ENCODE measurements at regions of chr11 and their contacts with region 1.

Region 1: GRCh38 chr11:68213555-68214174 is 569 bp upstream of the KMT5B start:
- DNase-seq: peak; percentile 79 to 93
- H3K4me3 ChIP-seq: peak overlapping the region; percentile 67 to 95
- H3K27ac ChIP-seq: peak overlapping the region; percentile 97 to 98
- H3K4me1 ChIP-seq: peaks cover 0 to 50% (median 32%) of the 10 kb centered on the region in 4 donors
- H3K27me3 ChIP-seq: no peaks in the 10 kb centered on the region
- CTCF ChIP-seq: peak; percentile 8 to 16

Region 2: DNA sequence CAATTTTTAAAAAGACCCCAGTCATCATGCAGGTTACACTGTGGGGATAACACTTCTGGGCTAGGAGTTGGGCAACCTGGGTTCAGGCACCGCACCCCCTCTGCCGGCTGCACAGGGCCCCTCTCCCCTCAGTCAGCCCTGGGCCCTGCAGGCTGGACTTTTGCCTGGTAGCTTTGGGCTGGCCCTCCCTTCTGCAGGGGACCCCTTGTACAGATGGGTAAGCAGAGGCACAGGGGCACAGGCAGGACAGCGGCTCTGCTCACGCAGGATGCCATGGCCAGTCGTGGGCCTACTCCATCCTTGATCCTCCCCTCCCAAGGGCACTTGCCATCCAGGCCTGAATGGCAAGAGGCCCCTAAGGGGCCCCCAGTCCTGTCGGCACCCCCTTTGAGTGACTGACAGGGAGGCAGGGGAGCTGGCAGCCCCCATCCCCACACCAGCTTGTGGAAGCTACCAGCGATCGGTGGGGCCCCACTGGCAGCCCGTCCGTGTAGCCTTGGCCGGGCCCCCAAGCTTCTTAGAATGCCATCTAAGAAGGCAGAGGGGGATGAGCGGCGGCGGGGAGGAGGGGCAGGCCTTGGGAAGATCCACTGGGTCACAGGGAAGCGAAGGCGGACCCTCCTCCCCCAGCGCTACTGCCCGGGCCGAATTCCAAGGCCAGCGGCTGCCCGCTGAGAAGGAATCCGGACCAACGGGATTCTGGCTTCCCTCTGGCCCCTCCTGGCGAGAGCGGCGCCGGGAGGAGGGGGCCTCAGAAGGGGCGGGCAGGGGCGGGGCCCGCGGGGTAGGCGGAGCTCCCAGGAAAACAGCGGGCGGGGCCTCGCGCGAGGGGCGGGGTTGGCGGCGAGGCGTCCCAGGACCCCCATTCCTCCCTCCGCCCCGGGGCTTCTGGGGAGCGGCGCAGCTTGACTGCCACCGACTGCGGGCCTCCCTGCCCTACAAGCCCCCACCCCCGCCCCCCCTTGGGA is 85.7 kb before region 1 on chr11:
- intact Hi-C with region 1: loop called (anchors 5 kb)
- DNase-seq: peak in 1 of 2 donors; percentile 74
- H3K4me3 ChIP-seq: peak overlapping the region; percentile 49 to 60
- H3K27ac ChIP-seq: peak overlapping the region; percentile 73 to 76
- H3K4me1 ChIP-seq: peaks cover 0 to 27% (median 16%) of the 10 kb centered on the region in 4 donors
- H3K27me3 ChIP-seq: no peaks in the 10 kb centered on the region
- CTCF ChIP-seq: no peak

Region 3: DNA sequence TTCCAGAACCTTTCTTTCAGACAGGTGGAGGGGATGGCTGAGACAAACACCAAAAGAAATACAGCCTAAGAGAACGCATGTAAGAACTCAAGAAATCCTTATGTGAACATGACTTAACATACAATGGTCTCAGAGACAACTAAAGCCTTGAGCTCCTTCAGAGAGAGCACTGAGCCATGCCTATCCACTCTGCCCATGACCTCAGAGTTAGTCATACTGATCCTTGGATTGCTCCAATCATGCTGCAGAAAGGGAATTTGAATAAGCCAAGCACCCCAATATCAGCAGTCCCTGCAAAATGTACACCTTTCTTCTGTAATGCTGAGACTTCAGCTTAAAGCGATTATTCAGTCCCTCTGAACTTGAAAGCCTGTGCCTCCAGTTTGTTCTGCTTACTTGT is 49.2 kb before region 1 on chr11:
- intact Hi-C with region 1: no loop called
- DNase-seq: no peak
- H3K4me3 ChIP-seq: no peak overlapping the region
- H3K27ac ChIP-seq: no peak overlapping the region
- H3K4me1 ChIP-seq: no peaks in the 10 kb centered on the region
- H3K27me3 ChIP-seq: no peaks in the 10 kb centered on the region
- CTCF ChIP-seq: no peak

Measured in tibial artery (tissue), 4 donors.